Activated B cell treated with CpG ODN at 0.5 μM for 24 hours (primary cell): ENCODE measurements at regions of chr2 and their contacts with region 1.

Region 1: DNA sequence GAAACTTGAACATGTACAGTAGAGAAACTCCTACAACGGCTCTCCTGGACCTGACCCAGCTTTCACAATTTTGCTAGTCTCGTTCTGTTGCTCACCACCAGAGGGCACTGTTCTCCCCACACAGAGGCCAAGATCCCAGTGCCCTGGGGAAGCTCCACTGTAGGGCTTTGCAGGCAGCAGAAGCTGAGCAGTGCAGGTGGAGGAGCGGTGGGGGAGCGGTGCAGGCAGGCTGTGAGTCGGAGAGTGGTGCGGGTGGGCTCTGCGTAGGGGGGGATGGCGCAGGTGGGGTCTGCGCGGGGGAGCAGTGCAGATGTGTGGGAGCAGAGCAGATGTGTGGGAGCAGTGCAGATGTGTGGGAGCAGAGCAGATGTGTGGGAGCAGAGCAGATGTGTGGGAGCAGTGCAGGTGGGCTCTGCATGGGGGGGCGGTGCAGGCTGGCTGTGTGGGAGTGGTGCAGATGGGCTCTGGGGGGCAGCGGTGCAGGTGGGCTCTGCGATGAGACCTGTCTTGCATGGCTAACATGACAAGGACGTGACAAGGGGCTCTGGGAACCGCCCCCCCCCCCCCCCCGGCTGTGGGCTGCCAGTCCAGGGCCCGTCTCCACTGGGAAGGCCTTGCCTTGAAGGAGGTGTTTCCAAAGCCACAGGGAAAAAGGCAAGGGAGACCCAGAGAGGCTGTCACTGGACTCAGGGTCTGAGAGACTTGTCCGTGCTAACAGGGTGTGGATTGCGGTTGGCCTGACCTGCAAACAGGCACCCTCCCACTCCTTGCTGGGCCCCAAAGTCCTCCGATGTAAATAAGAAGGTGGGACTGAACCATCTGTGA is 7.3 kb downstream of the CYS1 start:
- DNase-seq: peak; percentile 42
- ATAC-seq: peak; percentile 95
- H3K4me3 Mint-ChIP-seq: no peak overlapping the region
- H3K27ac Mint-ChIP-seq: no peak overlapping the region
- H3K4me1 Mint-ChIP-seq: peaks cover 4% of the 10 kb centered on the region
- H3K27me3 Mint-ChIP-seq: peaks cover 43% of the 10 kb centered on the region
- CTCF ChIP-seq: no peak

Region 2: DNA sequence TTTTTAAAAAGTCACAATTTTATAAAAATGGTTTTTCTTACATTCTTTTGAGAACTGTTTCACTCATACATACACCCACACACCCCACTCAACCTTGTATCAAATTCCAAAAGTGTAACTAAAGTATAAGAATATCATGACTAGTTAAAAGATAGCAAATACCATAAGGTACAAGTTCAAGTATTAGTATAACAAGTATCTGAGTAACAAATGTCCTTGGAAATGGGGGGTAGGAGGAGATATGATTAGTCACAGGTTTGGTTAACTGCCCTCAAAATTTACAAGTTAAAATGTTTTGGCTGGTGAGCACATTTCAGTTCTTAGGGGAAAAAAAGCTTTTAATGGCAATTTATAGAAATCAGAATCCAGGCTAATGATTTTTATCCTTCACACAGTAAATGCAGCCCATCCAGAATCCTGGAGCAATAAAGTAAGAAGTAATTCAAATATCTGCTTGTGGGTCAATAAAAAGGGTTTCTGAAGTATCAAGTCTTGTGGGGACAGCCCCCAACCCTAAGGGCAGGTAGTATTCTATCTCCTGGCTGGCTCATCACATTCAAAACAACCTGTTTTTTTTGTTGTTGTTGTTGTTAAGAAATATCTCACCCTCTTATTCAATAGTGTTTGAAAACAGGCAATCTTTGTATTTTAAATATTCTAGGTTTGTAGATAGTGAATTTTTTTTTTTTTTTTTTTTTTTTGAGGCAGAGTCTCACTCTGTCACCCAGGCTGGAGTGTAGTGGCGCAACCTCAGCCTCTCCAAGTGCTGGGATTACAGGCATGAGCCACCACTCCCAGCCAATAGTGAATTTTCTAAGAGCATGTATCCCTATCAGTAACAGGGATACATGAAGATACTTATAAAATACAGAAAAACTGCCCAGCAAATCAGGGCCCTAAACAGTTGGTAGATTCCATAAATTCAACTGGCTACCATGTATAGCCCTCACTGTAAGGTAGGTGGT is 584.0 kb before region 1 on chr2:
- CTCF ChIA-PET with region 1: no interaction called
- POLR2A ChIA-PET with region 1: no interaction called
- intact Hi-C with region 1: no loop called
- DNase-seq: no peak
- ATAC-seq: no peak
- H3K4me3 Mint-ChIP-seq: no peak overlapping the region
- H3K27ac Mint-ChIP-seq: no peak overlapping the region
- H3K4me1 Mint-ChIP-seq: no peaks in the 10 kb centered on the region
- H3K27me3 Mint-ChIP-seq: no peaks in the 10 kb centered on the region
- CTCF ChIP-seq: no peak

Region 3: DNA sequence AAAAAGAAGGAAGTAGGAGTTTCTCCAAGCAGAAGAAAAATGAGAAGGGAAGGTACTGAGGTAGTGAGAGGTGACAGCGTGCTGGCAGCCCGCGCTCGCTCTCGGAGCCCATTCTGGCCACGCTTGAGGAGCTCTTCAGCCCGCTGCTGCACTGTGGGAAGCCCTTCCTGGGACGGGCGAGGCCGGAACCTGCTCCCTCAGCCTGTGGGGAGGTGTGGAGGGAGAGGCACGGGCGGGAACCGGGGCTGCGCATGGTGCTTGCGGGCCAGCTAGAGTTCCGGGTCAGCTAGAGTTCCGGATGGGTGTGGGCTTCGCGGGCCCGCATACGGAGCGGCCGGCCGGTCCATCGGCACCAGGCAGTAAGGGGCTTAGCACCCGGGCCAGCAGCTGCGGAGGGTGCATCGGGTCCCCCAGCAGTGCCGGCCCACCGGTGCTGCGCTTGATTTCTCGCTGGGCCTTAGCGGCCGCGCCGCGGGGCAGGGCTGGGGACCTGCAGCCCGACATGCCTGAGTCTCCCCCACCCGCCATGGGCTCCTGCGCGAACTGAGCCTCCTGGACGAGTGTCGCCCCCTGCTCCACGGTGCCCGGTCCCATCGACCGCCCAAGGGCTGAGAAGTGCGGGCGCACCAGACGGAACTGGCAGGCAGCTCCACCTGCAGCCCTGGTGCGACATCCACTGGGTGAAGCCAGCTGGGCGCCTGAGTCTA is 18.5 kb after region 1 on chr2:
- CTCF ChIA-PET with region 1: interaction called, 81 read pairs
- POLR2A ChIA-PET with region 1: no interaction called
- intact Hi-C with region 1: no loop called
- DNase-seq: no peak
- ATAC-seq: peak; percentile 56
- H3K4me3 Mint-ChIP-seq: peak overlapping the region; percentile 78
- H3K27ac Mint-ChIP-seq: no peak overlapping the region
- H3K4me1 Mint-ChIP-seq: peaks cover 8% of the 10 kb centered on the region
- H3K27me3 Mint-ChIP-seq: peaks cover 23% of the 10 kb centered on the region
- CTCF ChIP-seq: no peak

Region 4: DNA sequence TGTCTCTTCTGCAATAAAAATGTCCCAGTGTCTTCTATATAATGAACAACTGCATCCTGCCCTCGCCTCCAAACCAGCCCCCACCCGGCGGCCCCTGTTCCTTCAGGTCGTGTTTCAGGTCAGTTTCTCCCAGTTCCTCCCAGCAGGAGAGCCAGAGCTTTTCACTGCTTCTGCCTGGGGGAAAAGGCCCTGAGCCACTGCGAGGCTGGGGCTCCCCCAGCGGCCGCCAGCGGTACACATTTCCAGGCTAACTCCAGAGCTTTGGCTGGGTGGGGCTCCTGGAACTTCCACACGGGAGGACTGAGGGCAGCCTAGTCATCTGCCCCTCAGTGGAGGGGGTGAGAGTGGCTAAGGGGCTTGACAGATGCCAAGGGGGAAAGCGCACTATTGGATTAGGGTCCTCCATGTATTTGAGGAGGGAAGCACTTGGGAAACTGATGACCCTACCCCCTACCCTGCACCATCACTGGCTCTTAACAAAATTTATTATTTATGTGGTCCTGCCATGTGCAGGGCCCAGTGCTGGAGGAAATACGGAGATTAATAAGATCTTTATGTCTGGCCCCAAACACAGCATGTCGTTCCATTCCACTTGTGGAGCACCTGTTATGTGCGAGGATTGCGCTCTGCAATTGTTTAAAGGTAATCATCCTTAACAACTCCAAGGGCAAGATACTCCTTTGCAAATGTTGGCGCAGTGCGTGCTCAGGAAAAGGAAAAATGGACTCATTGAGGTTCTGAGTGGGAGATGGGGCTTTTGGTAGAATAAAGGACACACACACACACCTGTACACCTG is 24.7 kb after region 1 on chr2:
- CTCF ChIA-PET with region 1: interaction called, 81 read pairs
- POLR2A ChIA-PET with region 1: interaction called, 3 read pairs
- intact Hi-C with region 1: loop called (anchors 1 kb)
- DNase-seq: peak; percentile 25
- ATAC-seq: peak; percentile 81
- H3K4me3 Mint-ChIP-seq: no peak overlapping the region
- H3K27ac Mint-ChIP-seq: no peak overlapping the region
- H3K4me1 Mint-ChIP-seq: peaks cover 2% of the 10 kb centered on the region
- H3K27me3 Mint-ChIP-seq: peaks cover 14% of the 10 kb centered on the region
- CTCF ChIP-seq: peak; percentile 16

Region 5: GRCh38 chr2:10242998-10243925 is 170.4 kb after region 1 on chr2:
- CTCF ChIA-PET with region 1: no interaction called
- POLR2A ChIA-PET with region 1: no interaction called
- intact Hi-C with region 1: loop called (anchors 10 kb)
- DNase-seq: no peak
- ATAC-seq: no peak
- H3K4me3 Mint-ChIP-seq: no peak overlapping the region
- H3K27ac Mint-ChIP-seq: no peak overlapping the region
- H3K4me1 Mint-ChIP-seq: no peaks in the 10 kb centered on the region
- H3K27me3 Mint-ChIP-seq: no peaks in the 10 kb centered on the region
- CTCF ChIP-seq: no peak

Region 6: DNA sequence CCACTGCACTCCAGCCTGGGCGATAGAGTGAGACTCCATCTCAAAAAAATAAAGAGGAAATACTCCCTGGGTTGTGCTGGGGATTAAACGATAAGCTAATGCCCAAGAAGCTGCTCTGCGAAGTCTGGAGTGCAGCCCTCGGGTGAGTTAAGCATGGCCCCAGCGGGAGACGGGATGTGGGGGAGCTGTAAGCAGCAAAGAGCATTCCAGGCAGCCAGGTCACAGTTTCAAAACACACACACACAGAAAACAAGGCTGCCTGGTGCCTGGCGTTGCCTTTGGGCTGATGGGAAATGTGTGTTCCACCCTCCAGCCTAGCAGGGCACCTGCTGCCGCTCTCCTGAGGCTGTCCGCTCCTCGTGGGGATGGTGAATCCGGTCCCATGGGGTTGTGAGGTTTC is 351.2 kb after region 1 on chr2:
- CTCF ChIA-PET with region 1: no interaction called
- POLR2A ChIA-PET with region 1: no interaction called
- intact Hi-C with region 1: no loop called
- DNase-seq: no peak
- ATAC-seq: no peak
- H3K4me3 Mint-ChIP-seq: no peak overlapping the region
- H3K27ac Mint-ChIP-seq: no peak overlapping the region
- H3K4me1 Mint-ChIP-seq: no peaks in the 10 kb centered on the region
- H3K27me3 Mint-ChIP-seq: no peaks in the 10 kb centered on the region
- CTCF ChIP-seq: no peak

Region 7: DNA sequence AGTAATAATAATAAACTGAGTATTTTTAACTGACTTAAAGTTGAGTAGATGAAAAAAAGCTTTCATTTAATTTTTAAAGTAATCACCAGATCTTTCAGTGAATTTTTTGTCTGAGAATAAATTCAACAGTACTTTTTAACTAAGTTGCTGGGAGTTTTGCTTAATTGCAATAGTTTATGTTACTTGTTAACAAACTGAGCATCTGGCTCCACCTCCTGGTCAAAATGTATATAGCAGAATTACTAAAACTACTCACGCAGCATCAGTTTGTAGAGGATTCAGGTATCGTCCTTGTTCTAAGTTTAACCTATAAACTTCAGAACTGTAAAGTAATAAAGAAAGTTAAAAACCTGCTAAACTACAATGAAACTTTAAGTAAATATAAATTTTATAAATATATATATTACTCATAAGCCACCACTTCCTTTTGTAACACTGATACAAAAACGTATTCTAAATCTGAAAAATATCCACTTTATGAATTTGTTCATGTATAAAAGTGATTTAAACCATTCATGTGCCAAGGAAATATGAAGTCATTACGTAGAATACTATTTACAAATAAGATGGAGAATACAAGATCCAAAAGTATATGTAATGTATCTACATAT is 595.6 kb after region 1 on chr2:
- CTCF ChIA-PET with region 1: interaction called, 10 read pairs
- POLR2A ChIA-PET with region 1: no interaction called
- intact Hi-C with region 1: loop called (anchors 1 kb)
- DNase-seq: no peak
- ATAC-seq: peak; percentile 58
- H3K4me3 Mint-ChIP-seq: no peak overlapping the region
- H3K27ac Mint-ChIP-seq: no peak overlapping the region
- H3K4me1 Mint-ChIP-seq: no peaks in the 10 kb centered on the region
- H3K27me3 Mint-ChIP-seq: no peaks in the 10 kb centered on the region
- CTCF ChIP-seq: no peak